GM12878 (cell line): ENCODE measurements at regions of chr5 and their contacts with region 1.

Region 1: DNA sequence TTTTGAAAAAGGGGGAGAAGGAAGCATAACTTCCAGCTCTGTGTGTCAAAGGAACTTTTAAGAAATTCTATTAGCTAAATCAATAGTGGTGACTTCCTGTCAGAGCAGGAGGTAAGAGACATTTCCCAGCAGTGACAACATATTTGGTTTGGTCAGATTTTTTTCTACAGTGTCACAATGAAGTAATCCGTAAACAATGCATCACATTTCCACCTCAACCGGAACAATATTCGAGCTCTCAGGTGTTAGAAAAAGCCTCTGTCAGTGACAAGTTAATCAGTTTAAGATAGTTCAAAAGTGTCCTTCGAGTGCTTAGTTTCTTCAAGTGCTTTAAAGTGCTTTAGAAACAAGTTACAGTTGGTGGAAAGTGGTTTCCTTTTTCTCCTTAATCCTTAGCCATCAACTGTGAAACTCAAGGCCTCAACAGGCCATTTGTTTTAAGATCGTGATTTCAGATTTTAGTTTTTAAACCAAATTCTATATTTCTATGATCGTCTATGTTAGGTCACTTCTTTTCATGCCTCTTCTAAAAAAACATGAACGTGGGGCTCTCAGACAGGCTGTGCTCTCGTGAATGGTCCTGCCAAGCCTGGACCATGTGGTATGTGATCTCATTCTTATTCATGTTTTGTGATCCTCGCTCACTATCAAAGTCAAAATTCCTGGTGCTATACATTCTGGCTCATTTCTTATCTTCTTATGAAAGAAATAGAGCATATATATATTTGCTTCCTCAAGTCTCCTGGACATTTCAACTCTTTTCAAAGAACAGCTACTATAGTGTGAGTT is 181.9 kb upstream of the HMHB1 start:
- DNase-seq: no peak
- ATAC-seq: no peak
- H3K4me3 ChIP-seq: no peak overlapping the region
- H3K27ac ChIP-seq: no peak overlapping the region
- H3K4me1 ChIP-seq: no peaks in the 10 kb centered on the region
- H3K27me3 ChIP-seq: no peaks in the 10 kb centered on the region
- CTCF ChIP-seq: no peak
- EP300 ChIP-seq: no peak
- POLR2A ChIP-seq: no peak
- RAD21 ChIP-seq: no peak

Region 2: DNA sequence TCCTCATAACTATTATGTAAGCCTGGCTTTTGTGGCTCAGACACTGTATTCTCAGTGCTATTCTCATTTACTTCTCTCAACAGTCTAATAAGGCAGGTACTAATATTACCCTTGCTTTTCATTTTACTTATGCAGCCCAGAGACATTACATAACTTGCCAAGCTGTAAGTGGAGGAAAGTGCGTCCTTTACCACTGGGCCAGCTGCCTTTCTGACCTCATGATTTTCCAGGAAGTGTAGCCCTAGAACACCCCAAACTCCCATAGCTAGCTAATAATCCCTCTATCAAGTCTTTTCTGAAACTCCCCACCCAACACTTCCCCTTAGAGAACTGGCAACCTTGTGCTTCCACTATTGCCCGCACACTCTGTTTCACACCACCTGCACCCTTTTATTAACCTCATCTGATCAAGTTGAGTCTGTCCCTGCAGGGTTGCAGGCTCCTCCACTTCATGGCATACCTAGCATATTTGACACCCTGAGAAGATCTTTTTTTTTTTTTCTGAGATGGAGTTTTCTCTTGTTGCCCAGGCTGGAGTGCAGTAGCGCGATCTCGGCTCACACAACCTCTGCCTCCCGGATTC is 10.9 kb before region 1 on chr5:
- CTCF ChIA-PET with region 1: interaction called, 3 read pairs
- POLR2A ChIA-PET with region 1: interaction called, 3 read pairs
- RAD21 ChIA-PET with region 1: no interaction called
- SMC1A ChIA-PET with region 1: interaction called, 11 read pairs
- in situ Hi-C with region 1: no loop called
- intact Hi-C with region 1: no loop called
- DNase-seq: no peak
- ATAC-seq: no peak
- H3K4me3 ChIP-seq: no peak overlapping the region
- H3K27ac ChIP-seq: no peak overlapping the region
- H3K4me1 ChIP-seq: no peaks in the 10 kb centered on the region
- H3K27me3 ChIP-seq: no peaks in the 10 kb centered on the region
- CTCF ChIP-seq: no peak
- EP300 ChIP-seq: no peak
- POLR2A ChIP-seq: no peak
- RAD21 ChIP-seq: no peak